IMR-90 (cell line): ENCODE measurements at regions of chr4 and their contacts with region 1.

Region 1: GRCh38 chr4:70945452-70946055 is 43.4 kb downstream of the MOB1B start:
- DNase-seq: peak; percentile 66
- ATAC-seq: peak; percentile 85
- H3K4me3 ChIP-seq: no peak overlapping the region
- H3K27ac ChIP-seq: no peak overlapping the region
- H3K4me1 ChIP-seq: peaks cover 6% of the 10 kb centered on the region; the same call in 1 of the 2 replicates
- H3K27me3 ChIP-seq: no peaks in the 10 kb centered on the region
- CTCF ChIP-seq: no peak
- POLR2A ChIP-seq: no peak
- RAD21 ChIP-seq: no peak

Region 2: DNA sequence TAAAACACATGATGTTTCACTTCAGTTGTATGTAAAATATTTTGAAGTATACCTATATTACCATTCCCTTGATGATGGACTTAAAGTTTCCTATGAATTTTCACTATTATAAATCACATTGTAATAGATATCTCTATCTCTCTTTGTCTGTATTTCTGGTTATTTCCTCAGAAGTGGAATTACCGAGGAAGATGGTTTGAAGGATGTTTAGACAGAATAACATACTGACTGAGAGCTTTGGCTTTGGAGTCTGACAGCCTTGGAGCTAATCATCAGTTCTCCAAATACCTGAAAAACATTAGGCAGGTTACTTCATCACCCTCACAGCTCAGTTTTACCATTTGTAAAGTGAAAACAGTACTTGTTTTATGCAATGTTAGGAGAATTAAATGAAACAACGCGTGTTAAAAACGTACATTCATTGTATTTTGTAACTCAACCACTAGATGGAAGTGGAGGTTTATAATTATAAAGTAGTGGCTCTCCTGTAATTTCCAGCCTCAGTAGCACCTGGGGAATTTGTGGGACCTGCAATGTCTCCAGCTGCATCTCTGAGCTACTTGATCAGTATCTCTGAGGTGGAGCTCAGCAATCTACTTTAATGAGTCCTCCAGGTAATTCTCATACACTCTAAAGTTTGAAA is 293.6 kb before region 1 on chr4:
- CTCF ChIA-PET with region 1: no interaction called
- POLR2A ChIA-PET with region 1: interaction called, 14 read pairs
- dilution Hi-C with region 1: no loop called
- in situ Hi-C with region 1: no loop called
- intact Hi-C with region 1: no loop called
- DNase-seq: peak; percentile 52
- ATAC-seq: peak; percentile 88
- H3K4me3 ChIP-seq: no peak overlapping the region; the same call in 1 of the 2 replicates
- H3K27ac ChIP-seq: no peak overlapping the region
- H3K4me1 ChIP-seq: peaks cover 2% of the 10 kb centered on the region; the same call in 1 of the 2 replicates
- H3K27me3 ChIP-seq: no peaks in the 10 kb centered on the region
- CTCF ChIP-seq: peak; percentile 63
- POLR2A ChIP-seq: no peak
- RAD21 ChIP-seq: peak; percentile 75